Naive thymus-derived CD8-positive, alpha-beta T cell (primary cell): ENCODE measurements at regions of chr11 and their contacts with region 1.

Region 1: GRCh38 chr11:76221365-76221764 is 15.1 kb upstream of the WNT11 start:
- DNase-seq: no peak
- ATAC-seq: no peak
- H3K4me3 Mint-ChIP-seq: no peak overlapping the region
- H3K27ac Mint-ChIP-seq: no peak overlapping the region
- H3K4me1 Mint-ChIP-seq: peaks cover 0 to 3% (median 0%) of the 10 kb centered on the region in 4 donors
- H3K27me3 Mint-ChIP-seq: peaks cover 0 to 10% (median 0%) of the 10 kb centered on the region in 5 donors

Region 2: GRCh38 chr11:76205252-76206076 is 15.9 kb before region 1 on chr11:
- POLR2A ChIA-PET with region 1: no interaction called
- DNase-seq: no peak
- ATAC-seq: no peak
- H3K4me3 Mint-ChIP-seq: peak overlapping the region; percentile 54 to 81 (median 73)
- H3K27ac Mint-ChIP-seq: peak overlapping the region in 1 of 10 donors; percentile 56
- H3K4me1 Mint-ChIP-seq: peaks cover 1 to 29% (median 18%) of the 10 kb centered on the region in 4 donors
- H3K27me3 Mint-ChIP-seq: peaks cover 17 to 52% (median 36%) of the 10 kb centered on the region in 5 donors

Region 3: DNA sequence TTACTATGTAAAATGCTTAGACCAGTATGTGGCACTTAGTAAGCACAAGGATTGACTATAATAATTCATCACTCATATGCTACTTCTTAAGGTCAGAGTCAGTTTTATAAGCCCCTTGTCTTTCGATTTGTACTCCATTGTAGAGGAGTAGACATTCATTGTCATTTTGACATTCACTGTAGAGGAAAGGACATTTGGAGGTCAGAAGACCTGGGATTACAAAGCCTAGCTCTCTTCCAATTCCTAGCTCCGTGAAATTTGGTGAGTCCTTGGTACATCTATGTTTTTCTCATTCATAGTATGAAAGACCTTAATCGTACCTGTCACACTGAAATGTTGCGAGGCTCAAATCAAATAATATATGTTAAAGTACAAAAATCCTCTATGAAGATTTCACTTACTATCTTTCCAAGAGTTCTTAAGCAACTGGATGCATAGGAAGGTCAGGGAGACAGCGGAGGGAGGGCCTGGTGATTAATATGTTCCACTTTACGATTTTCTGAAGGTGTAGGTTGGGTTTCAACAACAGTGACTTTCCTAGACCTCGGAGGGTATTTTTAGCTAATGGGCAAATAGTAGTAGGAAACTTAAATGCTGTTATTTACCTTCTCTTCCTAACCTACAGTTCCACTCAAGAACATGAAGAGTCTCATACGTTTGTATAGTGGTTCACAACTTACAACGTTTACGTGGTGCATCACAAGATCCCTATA is 222.1 kb after region 1 on chr11:
- POLR2A ChIA-PET with region 1: interaction called, 10 read pairs
- DNase-seq: no peak
- ATAC-seq: no peak
- H3K4me3 Mint-ChIP-seq: peak overlapping the region; percentile 93 to 99 (median 97)
- H3K27ac Mint-ChIP-seq: peak overlapping the region; percentile 96 to 98 (median 97)
- H3K4me1 Mint-ChIP-seq: peaks cover 25 to 42% (median 39%) of the 10 kb centered on the region in 4 donors
- H3K27me3 Mint-ChIP-seq: no peaks in the 10 kb centered on the region